ENCODE measurements at regions of chr7 and their contacts with region 1.

Region 1: DNA sequence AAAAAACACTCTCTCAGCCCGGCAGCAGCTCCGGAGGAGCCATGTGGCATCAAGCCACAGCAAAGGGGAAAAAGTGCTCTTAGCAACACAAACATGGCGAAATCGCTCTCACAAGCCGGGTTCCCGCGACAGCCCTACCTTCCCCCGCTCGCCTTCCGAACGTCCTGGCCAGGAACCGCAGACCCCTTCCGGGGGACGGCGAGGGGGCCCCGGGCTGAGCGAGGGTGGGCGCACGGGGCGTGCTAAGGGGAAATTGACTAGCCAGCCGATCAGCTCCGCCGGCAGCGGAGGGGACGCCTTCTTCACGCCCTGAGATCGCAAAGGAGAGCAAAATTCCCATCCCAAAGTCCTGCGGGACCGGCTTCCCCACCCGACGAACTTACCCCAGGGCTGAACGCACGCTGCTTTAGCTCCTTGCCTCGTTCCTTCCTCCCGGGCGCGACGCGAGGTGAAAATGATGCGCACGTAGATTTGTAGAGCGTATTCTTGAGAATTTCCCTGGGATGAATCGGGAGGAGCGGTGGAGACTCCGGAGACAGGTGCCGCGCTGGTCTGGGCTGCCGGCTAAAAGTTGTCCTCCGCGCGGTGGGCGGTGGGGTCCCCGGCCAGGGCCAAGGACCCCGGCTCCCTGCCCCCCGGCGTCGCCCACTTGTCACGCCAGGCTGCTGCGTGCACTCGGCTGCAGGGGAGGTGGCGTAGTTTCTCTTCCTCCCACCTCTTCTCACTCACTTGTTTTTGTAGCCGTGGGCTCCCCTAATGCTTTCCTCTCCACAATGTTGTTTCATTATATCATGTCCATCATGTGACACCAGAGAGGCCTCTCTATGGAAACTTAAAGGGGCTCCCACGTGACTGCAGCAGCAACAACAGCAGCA is 220.1 kb upstream of the MKLN1 start:
- DNase-seq: peak; percentile 69
- ATAC-seq: peak; percentile 45
- H3K4me3 Mint-ChIP-seq: peak overlapping the region; percentile 99
- H3K27ac Mint-ChIP-seq: peak overlapping the region; percentile 99
- H3K4me1 Mint-ChIP-seq: peaks cover 75% of the 10 kb centered on the region
- H3K27me3 Mint-ChIP-seq: no peaks in the 10 kb centered on the region
- CTCF ChIP-seq: no peak

Region 2: DNA sequence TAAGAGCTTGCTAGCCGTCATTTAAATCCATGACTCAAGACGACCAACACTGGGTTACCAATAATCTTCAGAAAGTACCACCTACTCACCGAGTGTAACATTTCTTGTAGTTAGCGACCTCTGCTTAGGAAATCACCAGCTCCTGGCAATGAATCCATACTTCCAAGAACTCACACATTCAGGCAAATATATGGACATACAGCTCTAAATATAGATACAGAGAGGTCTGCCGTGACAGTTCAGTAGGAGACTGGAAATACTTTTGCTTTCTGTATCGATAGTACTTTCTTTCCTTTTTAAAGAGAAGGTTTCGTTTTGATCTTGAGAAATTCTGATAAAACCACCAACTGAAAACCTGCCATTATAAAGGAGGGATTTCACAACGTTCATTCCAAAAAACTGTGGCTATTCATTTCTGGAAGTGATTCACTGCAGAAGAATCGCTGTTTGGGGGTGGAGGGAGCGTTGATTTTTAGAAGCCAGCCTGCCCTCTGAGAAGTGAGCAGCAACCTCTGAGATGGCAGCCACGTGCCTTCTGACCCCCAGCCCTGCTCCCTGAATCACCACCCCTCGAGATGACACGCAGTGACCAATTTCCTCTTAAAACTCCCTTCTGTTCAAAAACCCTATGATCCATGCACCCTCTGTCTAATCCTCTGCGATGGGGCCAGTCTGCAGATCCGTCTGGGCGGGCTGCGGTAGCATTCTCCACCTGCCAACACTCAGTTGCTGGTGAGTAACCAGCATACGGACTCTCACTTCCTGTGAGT is 194.5 kb before region 1 on chr7:
- CTCF ChIA-PET with region 1: no interaction called
- POLR2A ChIA-PET with region 1: no interaction called
- intact Hi-C with region 1: loop called (anchors 1 kb)
- DNase-seq: peak; percentile 54
- ATAC-seq: peak; percentile 91
- H3K4me3 Mint-ChIP-seq: peak overlapping the region; percentile 87
- H3K27ac Mint-ChIP-seq: peak overlapping the region; percentile 90
- H3K4me1 Mint-ChIP-seq: peaks cover 86% of the 10 kb centered on the region
- H3K27me3 Mint-ChIP-seq: no peaks in the 10 kb centered on the region
- CTCF ChIP-seq: no peak

Region 3: GRCh38 chr7:131027287-131027773 is 80.2 kb before region 1 on chr7:
- CTCF ChIA-PET with region 1: no interaction called
- POLR2A ChIA-PET with region 1: no interaction called
- intact Hi-C with region 1: loop called (anchors 1 kb)
- DNase-seq: no peak
- ATAC-seq: peak; percentile 6
- H3K4me3 Mint-ChIP-seq: peak overlapping the region; percentile 66
- H3K27ac Mint-ChIP-seq: peak overlapping the region; percentile 98
- H3K4me1 Mint-ChIP-seq: peaks cover 93% of the 10 kb centered on the region
- H3K27me3 Mint-ChIP-seq: no peaks in the 10 kb centered on the region
- CTCF ChIP-seq: no peak

Region 4: GRCh38 chr7:131090886-131091692 is 16.5 kb before region 1 on chr7:
- CTCF ChIA-PET with region 1: interaction called, 5 read pairs
- POLR2A ChIA-PET with region 1: interaction called, 5 read pairs
- intact Hi-C with region 1: loop called (anchors 1 kb)
- DNase-seq: no peak
- ATAC-seq: no peak
- H3K4me3 Mint-ChIP-seq: no peak overlapping the region
- H3K27ac Mint-ChIP-seq: peak overlapping the region; percentile 73
- H3K4me1 Mint-ChIP-seq: peaks cover 71% of the 10 kb centered on the region
- H3K27me3 Mint-ChIP-seq: no peaks in the 10 kb centered on the region
- CTCF ChIP-seq: no peak

Region 5: DNA sequence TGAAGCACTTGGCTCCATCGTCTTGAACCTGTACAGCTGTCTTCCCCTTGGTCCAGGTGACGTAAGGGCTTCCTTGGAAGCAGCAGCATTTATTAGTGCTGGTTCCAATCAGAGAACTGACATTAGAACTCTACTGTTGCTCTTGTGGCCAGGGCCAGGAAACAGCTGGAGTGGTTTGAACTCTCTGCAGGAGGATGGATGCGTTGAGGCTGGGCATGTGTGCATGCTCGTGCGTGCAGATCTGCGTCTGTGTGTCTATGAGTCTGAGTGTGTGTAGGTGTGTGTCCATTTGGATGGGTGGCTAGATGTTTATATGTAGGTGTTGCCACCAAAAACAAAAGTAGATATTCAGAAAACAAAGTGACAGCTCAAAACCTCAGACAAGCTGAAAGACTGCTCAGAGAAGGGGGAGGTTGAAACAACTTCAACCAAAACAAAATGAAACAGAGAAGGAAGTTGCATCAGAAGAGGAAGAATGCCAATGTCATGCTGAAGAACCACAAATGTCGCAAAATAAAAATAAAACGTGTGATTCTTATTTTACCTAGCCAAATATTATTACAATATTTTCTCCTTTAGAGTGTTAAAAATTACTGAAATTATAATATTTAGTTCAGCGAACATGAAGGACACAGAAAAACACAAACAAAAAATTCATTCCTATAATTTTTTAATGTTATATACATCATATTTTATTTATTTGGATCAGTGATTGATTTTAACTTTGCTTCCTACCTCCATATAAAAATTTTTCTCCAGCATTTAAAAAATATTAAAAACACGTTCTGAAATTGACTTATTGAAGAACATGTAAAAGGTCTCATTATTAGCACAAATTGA is 124.0 kb after region 1 on chr7:
- CTCF ChIA-PET with region 1: interaction called, 4 read pairs
- POLR2A ChIA-PET with region 1: interaction called, 14 read pairs
- intact Hi-C with region 1: loop called (anchors 1 kb)
- DNase-seq: peak; percentile 31
- ATAC-seq: peak; percentile 73
- H3K4me3 Mint-ChIP-seq: peak overlapping the region; percentile 82
- H3K27ac Mint-ChIP-seq: peak overlapping the region; percentile 97
- H3K4me1 Mint-ChIP-seq: peaks cover 29% of the 10 kb centered on the region
- H3K27me3 Mint-ChIP-seq: no peaks in the 10 kb centered on the region
- CTCF ChIP-seq: no peak

Region 6: GRCh38 chr7:131424219-131424822 is 316.7 kb after region 1 on chr7:
- CTCF ChIA-PET with region 1: interaction called, 3 read pairs
- POLR2A ChIA-PET with region 1: interaction called, 4 read pairs
- intact Hi-C with region 1: loop called (anchors 1 kb)
- DNase-seq: no peak
- ATAC-seq: peak; percentile 81
- H3K4me3 Mint-ChIP-seq: no peak overlapping the region
- H3K27ac Mint-ChIP-seq: no peak overlapping the region
- H3K4me1 Mint-ChIP-seq: peaks cover 2% of the 10 kb centered on the region
- H3K27me3 Mint-ChIP-seq: no peaks in the 10 kb centered on the region
- CTCF ChIP-seq: no peak

Measured in activated B cell treated with CpG ODN at 0.5 μM for 24 hours (primary cell).